CD4-positive, alpha-beta memory T cell (primary cell): ENCODE measurements at regions of chr10 and their contacts with region 1.

Region 1: DNA sequence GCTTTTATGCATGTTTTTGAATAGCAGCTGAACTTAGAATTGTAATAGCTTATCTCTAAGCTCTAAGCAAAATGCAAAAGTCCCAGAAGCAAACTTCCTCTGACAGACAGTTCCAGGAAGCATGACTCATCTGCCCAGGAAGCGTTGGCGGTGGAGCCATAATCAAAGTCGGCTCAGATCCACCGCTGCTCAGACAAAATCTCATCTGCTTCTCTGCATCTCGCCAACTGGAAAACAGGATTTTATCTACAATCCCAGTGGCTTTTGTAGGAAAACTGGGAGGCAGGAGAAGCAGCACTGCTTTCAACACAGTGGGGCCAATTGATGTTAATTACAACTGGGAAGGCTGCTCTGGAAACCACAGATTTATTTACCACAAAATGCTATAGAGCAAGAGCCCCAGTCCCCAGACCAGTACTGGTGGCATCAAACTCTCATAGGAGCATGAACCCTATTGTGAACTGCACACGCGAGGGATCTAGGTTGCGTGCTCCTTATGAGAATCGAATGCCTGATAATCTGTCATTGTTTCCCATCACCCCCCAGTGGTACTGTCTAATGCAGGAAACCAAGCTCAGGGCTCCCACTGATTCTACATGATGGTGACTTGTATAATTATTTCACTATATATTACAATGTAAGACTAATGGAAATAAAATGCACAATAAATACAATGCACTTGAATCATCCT is 99.9 kb downstream of the CUBN start:
- DNase-seq: peak; percentile 65 to 90 (median 68)
- H3K4me3 ChIP-seq: peak overlapping the region in 1 of 2 donors; percentile 51
- H3K4me3 Mint-ChIP-seq: peak overlapping the region; percentile 81 to 86 (median 84)
- H3K27ac ChIP-seq: peak overlapping the region; percentile 90
- H3K27ac Mint-ChIP-seq: peak overlapping the region; percentile 95 to 97 (median 97)
- H3K4me1 ChIP-seq: peaks cover 90% of the 10 kb centered on the region
- H3K4me1 Mint-ChIP-seq: peaks cover 55 to 94% (median 77%) of the 10 kb centered on the region in 4 donors
- H3K27me3 ChIP-seq: no peaks in the 10 kb centered on the region
- H3K27me3 Mint-ChIP-seq: no peaks in the 10 kb centered on the region

Region 2: DNA sequence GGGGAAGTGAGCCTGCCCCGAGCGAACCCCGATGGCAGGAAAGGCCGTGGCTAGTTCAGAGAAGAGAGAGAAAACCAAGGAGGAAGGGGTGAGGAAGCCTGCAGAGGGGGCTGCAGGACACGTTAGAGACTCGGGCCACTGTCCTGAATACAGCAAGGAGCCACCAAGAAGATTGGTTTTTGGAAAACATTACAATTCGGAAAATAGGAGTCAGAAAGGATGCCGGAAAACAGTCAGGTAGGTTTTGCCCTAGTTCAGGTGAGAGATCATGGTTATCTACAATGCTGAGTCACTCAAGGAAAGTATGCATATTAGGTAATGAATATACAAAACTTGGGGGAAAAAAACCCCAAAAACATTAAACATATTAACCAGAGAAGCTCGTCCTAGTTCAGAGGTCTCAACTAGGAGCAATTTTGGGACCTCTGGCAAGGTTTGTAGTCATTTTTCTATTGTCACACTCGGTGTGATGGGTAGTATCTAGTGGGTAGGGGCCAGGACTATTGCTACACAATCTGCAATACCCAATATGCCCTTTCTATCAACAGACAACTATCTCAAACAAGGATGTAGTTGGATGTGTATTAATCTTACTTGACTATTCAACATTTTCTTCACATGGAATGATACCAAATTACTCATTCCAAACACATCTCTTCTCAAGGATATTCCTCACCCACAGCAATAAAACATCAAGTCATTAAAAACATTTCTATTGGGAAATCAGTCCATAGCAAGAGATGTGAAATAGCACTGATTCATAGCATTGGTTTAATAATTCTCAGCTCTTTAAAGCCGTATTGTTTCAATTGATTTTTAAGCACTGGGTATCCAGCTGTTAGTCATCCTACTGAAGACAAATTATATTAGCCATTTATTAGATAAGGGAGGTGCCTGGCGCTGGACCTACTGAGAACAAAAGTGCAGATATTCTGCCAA is 138.1 kb before region 1 on chr10:
- CTCF ChIA-PET with region 1: no interaction called
- POLR2A ChIA-PET with region 1: no interaction called
- intact Hi-C with region 1: loop called (anchors 5 kb)
- DNase-seq: peak; percentile 20 to 47 (median 37)
- H3K4me3 ChIP-seq: peak overlapping the region in 1 of 2 donors; percentile 11
- H3K4me3 Mint-ChIP-seq: peak overlapping the region; percentile 64 to 84 (median 78)
- H3K27ac ChIP-seq: no peak overlapping the region
- H3K27ac Mint-ChIP-seq: peak overlapping the region in 6 of 7 donors; percentile 18 to 86 (median 61)
- H3K4me1 ChIP-seq: peaks cover 10% of the 10 kb centered on the region
- H3K4me1 Mint-ChIP-seq: peaks cover 6 to 13% (median 9%) of the 10 kb centered on the region in 4 donors
- H3K27me3 ChIP-seq: no peaks in the 10 kb centered on the region
- H3K27me3 Mint-ChIP-seq: no peaks in the 10 kb centered on the region

Region 3: GRCh38 chr10:16919121-16919982 is 110.4 kb before region 1 on chr10:
- CTCF ChIA-PET with region 1: no interaction called
- POLR2A ChIA-PET with region 1: no interaction called
- intact Hi-C with region 1: no loop called
- DNase-seq: no peak
- H3K4me3 ChIP-seq: no peak overlapping the region
- H3K4me3 Mint-ChIP-seq: no peak overlapping the region
- H3K27ac ChIP-seq: no peak overlapping the region
- H3K27ac Mint-ChIP-seq: no peak overlapping the region
- H3K4me1 ChIP-seq: no peaks in the 10 kb centered on the region
- H3K4me1 Mint-ChIP-seq: no peaks in the 10 kb centered on the region
- H3K27me3 ChIP-seq: no peaks in the 10 kb centered on the region
- H3K27me3 Mint-ChIP-seq: no peaks in the 10 kb centered on the region

Region 4: GRCh38 chr10:17001961-17002749 is 27.6 kb before region 1 on chr10:
- CTCF ChIA-PET with region 1: interaction called, 3 read pairs
- POLR2A ChIA-PET with region 1: interaction called, 10 read pairs
- intact Hi-C with region 1: loop called (anchors 1 kb)
- DNase-seq: peak; percentile 54 to 87 (median 66)
- H3K4me3 ChIP-seq: no peak overlapping the region
- H3K4me3 Mint-ChIP-seq: peak overlapping the region; percentile 7 to 79 (median 72)
- H3K27ac ChIP-seq: peak overlapping the region; percentile 82
- H3K27ac Mint-ChIP-seq: peak overlapping the region; percentile 95 to 99 (median 98)
- H3K4me1 ChIP-seq: peaks cover 38% of the 10 kb centered on the region
- H3K4me1 Mint-ChIP-seq: peaks cover 29 to 50% (median 38%) of the 10 kb centered on the region in 4 donors
- H3K27me3 ChIP-seq: no peaks in the 10 kb centered on the region
- H3K27me3 Mint-ChIP-seq: no peaks in the 10 kb centered on the region

Region 5: DNA sequence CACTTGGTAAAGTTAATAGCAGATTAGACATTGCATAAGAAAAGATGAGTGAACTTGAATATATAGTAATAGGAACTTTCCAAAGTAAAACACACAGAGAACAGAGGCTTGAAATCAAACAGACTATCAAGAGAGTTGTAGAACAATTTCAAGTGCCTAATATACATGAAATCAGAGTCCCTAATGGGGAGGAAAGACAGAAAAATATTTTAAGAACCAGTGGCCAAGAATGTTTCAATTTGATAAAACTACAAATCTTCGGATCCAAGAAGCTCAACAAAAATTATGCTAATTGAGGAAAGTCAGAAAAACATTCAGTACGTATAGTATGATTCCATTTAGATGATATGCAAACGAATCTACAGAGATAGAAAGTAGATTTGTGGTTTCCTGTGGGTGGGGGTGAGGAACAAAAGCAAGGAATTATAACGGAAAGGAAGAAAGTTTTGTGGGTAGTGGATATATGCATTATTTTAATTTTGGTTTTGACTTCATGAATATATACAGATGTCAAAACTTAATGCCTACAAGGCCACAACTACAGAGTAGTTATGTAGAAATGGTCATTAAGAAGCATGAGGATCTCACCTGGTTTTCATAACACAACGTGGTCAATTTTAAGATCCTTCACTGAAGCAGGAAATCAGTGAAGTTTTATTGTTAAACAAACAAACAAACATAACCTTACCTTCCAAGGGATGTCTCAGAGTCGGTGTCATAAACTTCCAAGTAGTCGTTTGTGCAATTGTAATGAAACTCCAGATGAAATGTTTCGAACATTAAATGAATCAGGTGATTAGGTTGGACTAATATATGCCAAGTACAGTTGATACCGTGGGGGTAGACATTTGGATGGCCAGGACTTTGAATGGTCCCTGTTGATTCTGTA is 37.9 kb after region 1 on chr10:
- CTCF ChIA-PET with region 1: no interaction called
- POLR2A ChIA-PET with region 1: no interaction called
- intact Hi-C with region 1: loop called (anchors 5 kb)
- DNase-seq: peak in 3 of 5 donors; percentile 2 to 5 (median 3)
- H3K4me3 ChIP-seq: no peak overlapping the region
- H3K4me3 Mint-ChIP-seq: peak overlapping the region in 7 of 8 donors; percentile 6 to 73 (median 8)
- H3K27ac ChIP-seq: no peak overlapping the region
- H3K27ac Mint-ChIP-seq: peak overlapping the region in 5 of 7 donors; percentile 0 to 62 (median 15)
- H3K4me1 ChIP-seq: peaks cover 13% of the 10 kb centered on the region
- H3K4me1 Mint-ChIP-seq: peaks cover 14 to 22% (median 19%) of the 10 kb centered on the region in 4 donors
- H3K27me3 ChIP-seq: no peaks in the 10 kb centered on the region
- H3K27me3 Mint-ChIP-seq: no peaks in the 10 kb centered on the region

Region 6: DNA sequence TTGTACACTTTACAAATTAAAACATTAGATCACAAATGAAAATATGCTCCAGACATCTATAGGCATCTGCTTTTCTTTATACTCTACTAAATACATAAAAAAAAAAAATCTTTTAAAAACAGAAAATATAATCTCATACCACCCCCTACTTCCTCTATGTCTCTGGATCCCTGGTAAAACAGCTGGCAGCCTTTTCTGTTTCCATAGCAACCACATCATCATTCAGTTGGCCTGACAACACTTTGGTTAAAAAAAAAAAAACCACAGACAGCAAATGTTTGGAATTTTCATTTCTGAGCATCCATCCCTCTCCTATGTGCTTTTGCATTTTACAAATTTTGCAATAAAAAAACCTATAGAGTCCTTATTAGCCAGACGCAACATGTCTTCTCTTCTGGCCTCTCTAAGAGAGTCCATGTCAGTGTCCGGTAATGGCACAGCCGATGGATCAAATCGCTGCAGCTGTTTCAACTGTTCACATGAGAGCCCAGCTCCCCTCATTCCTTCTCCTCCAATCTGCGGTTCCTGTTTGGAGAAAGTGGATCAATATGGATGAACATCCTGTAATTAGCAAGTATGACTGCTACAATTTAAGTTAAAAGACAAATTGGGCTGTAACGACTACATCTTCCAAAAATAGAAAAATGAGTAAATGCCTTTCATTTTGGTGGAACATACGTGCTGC is 1516.0 kb after region 1 on chr10:
- CTCF ChIA-PET with region 1: no interaction called
- POLR2A ChIA-PET with region 1: no interaction called
- intact Hi-C with region 1: no loop called
- DNase-seq: no peak
- H3K4me3 ChIP-seq: no peak overlapping the region
- H3K4me3 Mint-ChIP-seq: no peak overlapping the region
- H3K27ac ChIP-seq: no peak overlapping the region
- H3K27ac Mint-ChIP-seq: no peak overlapping the region
- H3K4me1 ChIP-seq: no peaks in the 10 kb centered on the region
- H3K4me1 Mint-ChIP-seq: no peaks in the 10 kb centered on the region
- H3K27me3 ChIP-seq: no peaks in the 10 kb centered on the region
- H3K27me3 Mint-ChIP-seq: no peaks in the 10 kb centered on the region